ENCODE measurements at regions of chr1 and their contacts with region 1.

Region 1: DNA sequence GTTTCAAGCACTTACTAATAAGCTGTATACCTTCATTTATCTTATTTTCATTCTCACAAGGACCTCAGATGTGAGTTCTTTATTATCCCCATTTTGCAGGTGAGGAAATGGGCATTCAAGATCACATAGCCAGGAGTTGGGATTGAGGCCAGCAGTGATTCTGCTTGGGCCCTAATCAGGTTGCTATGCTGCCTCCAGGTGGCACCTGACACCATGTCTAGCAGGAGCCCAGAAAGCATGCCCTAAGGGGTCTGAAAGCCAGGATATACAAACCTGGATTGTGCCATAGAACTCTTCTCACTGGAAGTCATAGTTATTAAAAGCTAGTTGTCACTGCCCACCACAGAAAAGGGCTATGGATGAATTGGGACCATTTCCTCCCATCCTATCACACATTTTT is 61.1 kb downstream of the FYB2 start:
- DNase-seq: peak; percentile 7 to 49
- ATAC-seq: peak; percentile 83 to 92
- H3K4me3 ChIP-seq: no peak overlapping the region
- H3K27ac ChIP-seq: no peak overlapping the region
- H3K4me1 ChIP-seq: no peaks in the 10 kb centered on the region
- H3K27me3 ChIP-seq: no peaks in the 10 kb centered on the region
- CTCF ChIP-seq: peak; percentile 32 to 72 (median 51)
- POLR2A ChIP-seq: no peak

Region 2: DNA sequence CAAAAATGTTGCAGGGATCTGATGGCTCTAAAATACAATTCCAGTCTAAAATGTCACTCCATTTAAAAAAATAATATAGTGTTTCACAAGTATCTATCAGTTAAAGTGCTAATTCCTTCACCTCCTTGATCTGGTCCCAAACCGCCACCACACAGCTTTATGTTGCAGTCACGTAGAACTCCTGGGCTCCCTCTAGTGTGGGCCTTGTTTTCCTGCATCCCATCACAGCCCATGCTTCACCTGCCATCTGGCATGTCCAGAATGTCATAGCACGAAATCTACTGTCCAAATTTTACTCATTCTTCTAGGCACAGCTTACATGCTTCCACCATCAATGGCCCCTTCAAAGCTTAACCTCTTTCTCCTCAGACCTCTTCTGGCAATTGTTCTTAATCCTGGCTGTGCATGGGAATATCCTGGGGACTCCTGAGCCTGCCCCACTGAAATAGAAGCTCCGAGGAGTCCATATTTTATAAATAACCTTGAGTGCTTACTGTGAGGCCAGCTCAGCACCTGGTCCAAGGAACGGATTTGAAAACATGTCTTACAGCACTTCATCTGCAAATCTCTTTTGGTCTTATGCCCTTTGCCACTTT is 45.5 kb after region 1 on chr1:
- in situ Hi-C with region 1: no loop called
- intact Hi-C with region 1: loop called (anchors 5 kb)
- DNase-seq: no peak
- ATAC-seq: no peak
- H3K4me3 ChIP-seq: no peak overlapping the region
- H3K27ac ChIP-seq: no peak overlapping the region
- H3K4me1 ChIP-seq: peaks cover 26 to 34% of the 10 kb centered on the region in 2 donors
- H3K27me3 ChIP-seq: no peaks in the 10 kb centered on the region
- CTCF ChIP-seq: peak in 2 of 5 experiments; percentile 16 to 30
- POLR2A ChIP-seq: no peak

Region 3: DNA sequence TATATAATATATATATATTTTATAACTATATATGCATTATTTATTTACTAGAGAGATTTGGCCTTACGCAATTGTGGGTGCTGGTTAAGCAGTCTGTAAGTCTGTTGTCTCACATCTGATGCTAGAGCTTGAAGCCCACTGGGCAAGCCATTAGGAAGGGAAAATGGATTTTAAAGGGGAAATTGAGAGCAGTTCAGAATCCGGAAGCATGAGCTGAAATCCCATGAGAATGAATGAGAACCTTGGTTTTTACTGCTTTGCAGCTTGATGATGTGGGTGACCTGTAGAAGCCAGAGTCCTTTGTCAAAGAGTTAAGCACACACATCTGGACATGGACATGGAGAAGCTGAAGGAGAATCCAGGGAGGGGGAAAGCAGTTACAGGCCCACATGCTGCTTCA is 886.5 kb after region 1 on chr1:
- in situ Hi-C with region 1: no loop called
- intact Hi-C with region 1: no loop called
- DNase-seq: no peak
- ATAC-seq: no peak
- H3K4me3 ChIP-seq: no peak overlapping the region
- H3K27ac ChIP-seq: no peak overlapping the region
- H3K4me1 ChIP-seq: no peaks in the 10 kb centered on the region
- H3K27me3 ChIP-seq: no peaks in the 10 kb centered on the region
- CTCF ChIP-seq: no peak
- POLR2A ChIP-seq: no peak

Measured in gastrocnemius medialis (tissue), 4 donors.